Calu3 (cell line): ENCODE measurements at regions of chr2 and their contacts with region 1.

Region 1: GRCh38 chr2:204779771-204780170 is 234.5 kb downstream of the PARD3B start:
- DNase-seq: no peak
- H3K4me3 Mint-ChIP-seq: no peak overlapping the region
- H3K27ac Mint-ChIP-seq: no peak overlapping the region
- H3K4me1 Mint-ChIP-seq: no peaks in the 10 kb centered on the region
- H3K27me3 Mint-ChIP-seq: no peaks in the 10 kb centered on the region
- CTCF ChIP-seq: no peak

Region 2: DNA sequence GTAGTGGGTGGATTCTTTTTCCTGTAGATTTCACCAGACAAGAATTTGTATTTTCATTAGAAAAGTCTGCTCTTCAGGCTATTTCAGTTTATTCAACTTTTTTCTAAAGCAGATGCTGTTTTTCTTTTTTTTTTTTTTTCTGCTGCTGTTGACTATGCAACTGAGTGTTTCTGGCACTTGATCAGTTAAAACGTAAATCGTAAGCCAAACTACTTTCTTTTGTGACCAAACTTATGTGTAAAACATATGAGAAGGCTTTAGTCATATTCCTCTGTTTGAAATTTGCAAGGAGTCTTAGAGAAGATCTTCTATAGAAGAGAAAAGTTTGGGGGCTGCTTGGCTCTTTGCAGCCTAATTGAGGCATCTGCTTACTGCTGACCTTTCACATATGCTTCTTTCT is 64.4 kb before region 1 on chr2:
- CTCF ChIA-PET with region 1: no interaction called
- intact Hi-C with region 1: no loop called
- DNase-seq: no peak
- H3K4me3 Mint-ChIP-seq: no peak overlapping the region
- H3K27ac Mint-ChIP-seq: no peak overlapping the region
- H3K4me1 Mint-ChIP-seq: no peaks in the 10 kb centered on the region
- H3K27me3 Mint-ChIP-seq: no peaks in the 10 kb centered on the region
- CTCF ChIP-seq: no peak

Region 3: GRCh38 chr2:204731996-204732395 is 47.8 kb before region 1 on chr2:
- CTCF ChIA-PET with region 1: no interaction called
- intact Hi-C with region 1: loop called (anchors 5 kb)
- DNase-seq: no peak
- H3K4me3 Mint-ChIP-seq: no peak overlapping the region
- H3K27ac Mint-ChIP-seq: no peak overlapping the region
- H3K4me1 Mint-ChIP-seq: peaks cover 5% of the 10 kb centered on the region
- H3K27me3 Mint-ChIP-seq: no peaks in the 10 kb centered on the region
- CTCF ChIP-seq: no peak